ENCODE measurements at regions of chr6 and their contacts with region 1.

Region 1: DNA sequence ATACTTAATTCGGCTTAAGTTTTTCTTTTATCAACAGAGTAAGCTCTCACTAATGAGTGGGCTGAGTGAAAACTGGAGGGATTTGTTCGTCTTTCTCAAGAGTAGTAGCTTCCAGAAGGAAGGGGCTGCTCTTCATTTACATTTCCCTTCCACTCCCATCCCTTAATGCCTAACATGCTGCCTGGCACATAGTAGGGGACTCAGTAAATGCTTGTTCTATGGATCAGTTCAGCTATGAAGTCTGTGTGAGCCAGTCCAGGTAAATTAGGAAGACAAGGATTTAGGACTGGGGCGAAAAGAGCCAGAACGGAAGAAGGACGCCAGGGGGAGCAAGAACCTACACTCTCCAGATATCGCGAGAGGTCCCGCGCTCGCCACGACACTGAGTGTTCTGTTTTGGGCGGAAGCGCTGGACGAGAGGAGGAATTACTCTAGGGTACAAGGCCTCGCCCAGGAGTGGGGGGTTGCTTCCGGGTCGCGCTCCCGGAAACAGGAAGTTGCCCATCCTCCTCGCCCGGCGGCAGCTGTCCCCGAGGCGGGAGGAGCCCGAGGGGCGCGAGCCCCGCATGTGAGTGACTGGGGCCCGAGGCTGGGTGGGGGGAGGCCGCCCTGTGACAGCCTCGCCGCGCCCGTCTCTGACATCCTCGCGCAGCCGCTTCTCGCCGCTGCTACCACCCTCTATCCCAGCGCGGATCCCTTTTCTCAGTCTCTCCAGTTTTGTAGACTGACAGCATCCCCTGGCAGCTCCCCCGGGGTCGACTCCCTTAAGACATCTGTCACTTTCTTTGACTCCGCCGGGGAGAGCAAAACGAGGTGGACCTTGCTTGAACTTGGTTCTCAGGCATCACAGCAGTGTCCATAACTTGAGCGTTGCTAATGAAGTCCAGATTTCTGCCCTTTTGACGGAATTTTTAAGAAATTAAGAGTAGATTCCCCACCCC is at the start of gene C6orf89:
- DNase-seq: peak; percentile 93 to 100 (median 94)
- ATAC-seq: peak; percentile 93
- H3K4me3 ChIP-seq: peak within 1 kb of the TSS; percentile 64
- H3K27ac ChIP-seq: peak within 1 kb of the TSS; percentile 90
- H3K4me1 ChIP-seq: peaks cover 17 to 37% of the 10 kb centered on the region in 2 experiments; a peak in 4 of 5 replicates
- H3K27me3 ChIP-seq: no peaks in the 10 kb centered on the region
- CTCF ChIP-seq: peak; percentile 81 to 97 (median 95)
- EP300 ChIP-seq: no peak; the same call in 1 of the 2 replicates
- POLR2A ChIP-seq: peak; percentile 91
- RAD21 ChIP-seq: peak; percentile 66 to 69
- polyA plus RNA-seq, gene C6orf89: 35.2 to 41.9 TPM

Region 2: DNA sequence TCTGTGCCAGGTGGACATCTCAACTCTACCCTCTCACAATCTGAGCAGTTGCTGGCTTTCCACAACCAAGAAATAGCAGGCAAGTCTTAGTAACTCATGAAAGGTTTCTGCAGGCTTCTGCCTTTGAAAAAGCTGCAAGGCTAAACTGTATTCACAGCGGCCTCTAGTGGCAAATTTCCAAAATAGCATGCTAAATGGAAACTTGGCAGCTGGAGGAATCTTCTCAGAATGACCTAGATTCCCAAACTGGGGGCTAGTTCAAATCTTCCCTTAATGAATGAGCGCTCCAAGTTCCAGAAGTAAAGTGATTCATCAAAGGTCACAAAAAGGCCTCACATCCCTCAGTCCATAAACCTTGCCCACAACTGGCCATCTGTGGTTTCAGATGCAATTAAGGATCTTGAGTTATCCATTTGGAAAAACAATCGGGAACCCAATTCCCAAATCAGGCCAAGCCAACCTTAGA is 34.5 kb before region 1 on chr6:
- CTCF ChIA-PET with region 1: no interaction called
- POLR2A ChIA-PET with region 1: interaction called, 11 read pairs
- in situ Hi-C with region 1: no loop called
- intact Hi-C with region 1: no loop called
- DNase-seq: peak; percentile 62 to 84 (median 66)
- ATAC-seq: peak; percentile 39
- H3K4me3 ChIP-seq: no peak overlapping the region
- H3K27ac ChIP-seq: no peak overlapping the region
- H3K4me1 ChIP-seq: peaks cover 22 to 35% of the 10 kb centered on the region in 2 experiments
- H3K27me3 ChIP-seq: no peaks in the 10 kb centered on the region
- CTCF ChIP-seq: peak; percentile 86 to 98 (median 91)
- EP300 ChIP-seq: no peak
- POLR2A ChIP-seq: no peak
- RAD21 ChIP-seq: peak; percentile 95

Region 3: GRCh38 chr6:36874443-36875249 is 11.1 kb before region 1 on chr6 and contains the start of gene PPIL1:
- CTCF ChIA-PET with region 1: interaction called, 3 read pairs
- POLR2A ChIA-PET with region 1: interaction called, 79 read pairs
- in situ Hi-C with region 1: no loop called
- intact Hi-C with region 1: no loop called
- DNase-seq: peak; percentile 95 to 96 (median 96)
- ATAC-seq: peak; percentile 91
- H3K4me3 ChIP-seq: peak within 1 kb of the TSS; percentile 76
- H3K27ac ChIP-seq: peak within 1 kb of the TSS; percentile 100
- H3K4me1 ChIP-seq: peaks cover 0 to 28% of the 10 kb centered on the region in 2 experiments; a peak in 2 of 5 replicates
- H3K27me3 ChIP-seq: no peaks in the 10 kb centered on the region
- CTCF ChIP-seq: 0 out of 6 replicates have a peak, but pooled peaks of 1 of the 3 experiments have one; percentile 0
- EP300 ChIP-seq: no peak
- POLR2A ChIP-seq: peak; percentile 90
- RAD21 ChIP-seq: 0 out of 4 replicates have a peak, but pooled peaks of 1 of the 2 experiments have one; percentile 9
- polyA plus RNA-seq, gene PPIL1: 195 to 205 TPM

Region 4: DNA sequence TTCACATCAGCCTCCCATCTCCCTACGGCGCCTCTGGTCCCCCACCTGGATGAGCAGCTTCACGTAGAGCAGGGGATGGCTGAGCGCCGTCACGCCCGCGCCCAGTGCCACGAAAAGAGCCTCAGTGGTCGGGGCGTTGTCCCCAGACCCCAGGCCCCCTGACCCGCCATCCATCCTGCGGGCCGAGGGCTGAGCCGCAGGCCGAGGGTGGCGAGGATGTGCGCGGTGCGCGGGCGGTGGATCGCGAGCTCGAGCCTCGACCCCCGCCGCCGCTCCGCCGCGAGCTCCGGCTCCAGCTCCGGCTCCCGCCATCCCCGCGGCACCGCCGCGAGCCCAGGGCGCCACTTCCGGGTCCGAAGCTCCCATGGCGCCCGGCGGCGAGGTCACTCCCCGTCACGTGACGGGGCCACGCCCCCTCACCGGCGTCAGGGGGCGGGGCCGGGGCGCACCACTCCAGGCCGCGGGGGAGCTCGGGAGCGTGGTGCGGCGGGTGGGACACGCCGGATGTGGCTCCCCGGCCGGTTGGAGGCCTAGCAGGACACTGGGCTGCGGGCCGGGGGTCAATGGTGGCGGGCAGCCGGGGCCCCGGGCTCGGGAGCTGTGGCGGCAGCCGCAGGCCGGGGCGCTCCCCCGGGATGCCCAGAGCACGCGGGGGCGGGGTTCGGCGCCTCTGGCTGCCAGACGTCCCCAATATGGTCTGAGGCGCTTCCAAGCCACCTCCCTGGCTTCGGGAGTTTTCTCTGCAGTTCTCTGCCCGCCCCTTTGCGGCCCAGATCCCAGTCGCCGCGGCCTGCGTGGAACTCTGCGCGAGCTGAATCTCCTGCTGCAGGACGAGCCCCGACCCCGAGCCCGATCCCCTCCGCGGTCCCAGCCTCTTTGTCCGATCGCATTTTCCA is 100.3 kb after region 1 on chr6 and contains the start of gene MTCH1:
- CTCF ChIA-PET with region 1: no interaction called
- POLR2A ChIA-PET with region 1: interaction called, 3 read pairs
- in situ Hi-C with region 1: no loop called
- intact Hi-C with region 1: loop called (anchors 5 kb)
- DNase-seq: peak; percentile 95 to 98 (median 98)
- ATAC-seq: peak; percentile 91
- H3K4me3 ChIP-seq: peak within 1 kb of the TSS; percentile 95
- H3K27ac ChIP-seq: peak within 1 kb of the TSS; percentile 84
- H3K4me1 ChIP-seq: peaks cover 25 to 31% of the 10 kb centered on the region in 2 experiments
- H3K27me3 ChIP-seq: peaks cover 0 to 2% of the 10 kb centered on the region in 2 experiments; a peak in 2 of 5 replicates
- CTCF ChIP-seq: 0 out of 6 replicates have a peak, but pooled peaks of 1 of the 3 experiments have one; percentile 1
- EP300 ChIP-seq: 0 out of 2 replicates have a peak, but pooled peaks have one; percentile 24
- POLR2A ChIP-seq: peak; percentile 83
- RAD21 ChIP-seq: no peak
- polyA plus RNA-seq, gene MTCH1: 7.9 to 14.1 TPM

Region 5: DNA sequence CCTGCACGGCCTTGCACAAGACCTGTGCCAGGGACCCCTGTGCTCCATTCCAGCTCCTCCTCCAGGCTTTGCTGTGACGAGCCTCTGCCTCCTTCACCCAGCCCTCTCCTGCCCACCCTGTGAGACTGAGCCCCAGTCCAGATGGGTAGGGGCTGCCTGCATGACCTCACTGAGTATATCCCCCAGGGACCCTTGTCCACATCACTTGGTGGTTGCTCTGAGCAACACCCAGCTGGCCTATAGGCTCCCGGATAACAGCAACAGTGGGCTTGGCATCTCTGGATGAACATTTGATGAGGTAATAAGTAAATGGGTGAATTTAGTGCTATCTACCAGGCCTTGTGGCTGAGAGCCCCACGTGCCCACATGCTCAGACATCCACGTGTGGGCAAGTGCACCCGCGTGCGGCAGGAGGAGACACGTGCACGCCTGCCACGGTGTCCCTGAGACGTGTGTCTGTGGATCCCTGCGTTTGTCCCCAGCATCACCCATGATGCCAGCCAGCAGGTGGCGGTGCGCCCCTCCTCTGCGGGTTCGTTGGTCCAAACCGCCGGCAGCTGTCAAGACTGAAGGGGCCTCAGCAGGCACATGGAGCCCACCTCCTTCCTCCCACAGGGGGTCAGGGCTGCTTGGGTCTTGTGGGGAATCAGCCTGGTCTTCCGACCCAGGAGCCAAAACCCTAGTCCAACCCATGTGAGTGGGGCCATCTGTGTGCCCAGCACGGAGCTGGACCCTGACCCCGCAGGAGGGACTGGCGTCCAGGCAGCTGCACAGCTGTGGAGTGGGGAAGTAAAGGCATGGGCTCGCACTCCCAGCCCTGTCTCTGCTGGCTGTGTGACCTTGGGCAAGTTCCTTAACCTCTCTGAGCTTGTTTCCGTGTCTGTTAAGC is 165.7 kb after region 1 on chr6:
- CTCF ChIA-PET with region 1: no interaction called
- POLR2A ChIA-PET with region 1: no interaction called
- in situ Hi-C with region 1: no loop called
- intact Hi-C with region 1: no loop called
- DNase-seq: peak; percentile 86 to 94 (median 87)
- ATAC-seq: peak; percentile 75
- H3K4me3 ChIP-seq: no peak overlapping the region
- H3K27ac ChIP-seq: peak overlapping the region; percentile 95
- H3K4me1 ChIP-seq: peaks cover 52 to 77% of the 10 kb centered on the region in 2 experiments
- H3K27me3 ChIP-seq: no peaks in the 10 kb centered on the region
- CTCF ChIP-seq: peak; percentile 96 to 97 (median 96)
- EP300 ChIP-seq: peak; percentile 35; the same call in 1 of the 2 replicates
- POLR2A ChIP-seq: no peak
- RAD21 ChIP-seq: peak; percentile 98 to 99

Region 6: DNA sequence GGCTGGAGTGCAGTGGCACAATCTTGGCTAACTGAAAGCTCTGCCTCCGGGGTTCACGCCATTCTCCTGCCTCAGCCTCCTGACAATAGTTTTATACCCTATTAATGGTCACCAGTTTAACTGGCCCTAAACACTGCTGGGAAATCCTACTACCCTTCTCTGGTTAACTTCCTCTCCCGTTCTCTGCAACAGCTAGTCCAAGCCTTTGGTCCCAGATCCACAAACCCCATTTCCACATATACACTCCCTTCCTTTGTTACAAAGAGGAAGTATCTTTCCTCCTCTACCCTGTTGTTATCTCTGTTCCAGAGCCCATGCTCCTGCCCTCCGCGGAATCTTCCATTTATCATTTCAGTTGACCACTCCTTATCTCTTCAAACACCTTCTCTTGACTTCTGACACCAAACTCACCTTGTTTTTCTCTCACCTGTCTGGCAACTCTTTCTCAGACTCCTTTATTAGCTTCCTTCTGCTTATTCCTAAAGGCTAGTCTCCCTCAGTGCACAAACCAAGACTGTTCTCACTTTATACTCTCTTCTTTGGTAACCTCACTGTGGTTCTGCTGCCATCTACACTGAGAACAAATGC is 346.8 kb after region 1 on chr6:
- CTCF ChIA-PET with region 1: no interaction called
- POLR2A ChIA-PET with region 1: no interaction called
- in situ Hi-C with region 1: no loop called
- intact Hi-C with region 1: loop called (anchors 2 kb)
- DNase-seq: peak; percentile 59 to 87 (median 76)
- ATAC-seq: peak; percentile 91
- H3K4me3 ChIP-seq: peak overlapping the region; percentile 14; the same call in 1 of the 2 replicates
- H3K27ac ChIP-seq: peak overlapping the region; percentile 77
- H3K4me1 ChIP-seq: peaks cover 6 to 24% of the 10 kb centered on the region in 2 experiments
- H3K27me3 ChIP-seq: no peaks in the 10 kb centered on the region
- CTCF ChIP-seq: no peak
- EP300 ChIP-seq: peak; percentile 94
- POLR2A ChIP-seq: peak; percentile 58; the same call in 1 of the 2 replicates
- RAD21 ChIP-seq: peak in 1 of 2 experiments; percentile 34; a peak in 1 of 4 replicates

Measured in K562 (cell line).